ENCODE measurements at regions of chr10 and their contacts with region 1.

Region 1: DNA sequence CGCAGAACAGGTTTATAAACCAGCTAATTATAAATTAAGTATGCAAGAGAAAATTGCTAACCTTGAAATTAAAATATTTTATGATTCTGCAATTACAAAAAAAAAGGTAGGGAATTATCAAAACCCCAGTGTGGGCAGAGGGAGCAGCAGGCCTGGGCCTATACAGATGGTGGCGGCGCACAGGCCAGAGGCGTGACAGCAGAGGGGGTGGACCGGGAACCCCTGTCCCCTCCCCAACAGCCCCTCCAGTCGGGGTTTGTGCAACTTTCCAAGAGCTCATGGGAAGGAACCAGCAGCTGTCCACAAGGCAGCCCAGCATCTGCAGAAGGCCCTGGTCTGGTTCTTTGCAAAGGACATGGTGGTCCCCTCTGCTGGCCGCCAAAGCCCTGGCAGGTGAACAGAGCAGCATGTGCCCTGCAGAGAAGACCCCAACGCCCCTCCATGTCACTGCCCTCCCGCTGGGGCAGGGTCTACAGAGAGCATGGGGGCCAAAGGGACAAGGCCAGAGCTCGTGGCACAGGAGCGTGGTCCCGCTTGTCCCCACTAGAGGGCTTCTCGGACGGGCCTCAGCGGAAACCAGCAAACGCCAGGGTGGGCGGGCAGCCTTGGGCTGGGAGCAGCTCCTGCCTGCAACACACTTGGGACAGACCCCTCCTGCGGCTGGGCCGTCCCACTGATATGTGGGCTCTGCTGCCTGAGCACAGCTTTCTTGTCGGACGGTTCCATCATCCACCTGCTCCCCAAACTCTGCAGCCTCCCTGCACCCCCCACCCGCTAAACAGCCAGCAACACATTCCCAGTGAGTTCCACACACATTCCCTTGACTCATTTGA is 75.1 kb downstream of the EBF3 start:
- DNase-seq: peak in 13 of 14 experiments; percentile 9 to 49 (median 19)
- ATAC-seq: peak; percentile 34
- H3K4me3 ChIP-seq: no peak overlapping the region
- H3K4me3 Mint-ChIP-seq: no peak overlapping the region
- H3K27ac ChIP-seq: no peak overlapping the region
- H3K27ac Mint-ChIP-seq: no peak overlapping the region
- H3K4me1 ChIP-seq: no peaks in the 10 kb centered on the region
- H3K4me1 Mint-ChIP-seq: no peaks in the 10 kb centered on the region
- H3K27me3 ChIP-seq: no peaks in the 10 kb centered on the region
- H3K27me3 Mint-ChIP-seq: peaks cover 9% of the 10 kb centered on the region
- CTCF ChIP-seq: peak; percentile 55

Region 2: GRCh38 chr10:129790715-129791446 is 98.1 kb before region 1 on chr10:
- CTCF ChIA-PET with region 1: no interaction called
- POLR2A ChIA-PET with region 1: no interaction called
- intact Hi-C with region 1: no loop called
- DNase-seq: no peak
- ATAC-seq: no peak
- H3K4me3 ChIP-seq: no peak overlapping the region
- H3K4me3 Mint-ChIP-seq: no peak overlapping the region
- H3K27ac ChIP-seq: no peak overlapping the region
- H3K27ac Mint-ChIP-seq: no peak overlapping the region
- H3K4me1 ChIP-seq: no peaks in the 10 kb centered on the region
- H3K4me1 Mint-ChIP-seq: no peaks in the 10 kb centered on the region
- H3K27me3 ChIP-seq: no peaks in the 10 kb centered on the region
- H3K27me3 Mint-ChIP-seq: no peaks in the 10 kb centered on the region
- CTCF ChIP-seq: no peak

Region 3: GRCh38 chr10:129825826-129826225 is 63.2 kb before region 1 on chr10:
- CTCF ChIA-PET with region 1: no interaction called
- POLR2A ChIA-PET with region 1: no interaction called
- intact Hi-C with region 1: no loop called
- DNase-seq: no peak
- ATAC-seq: no peak
- H3K4me3 ChIP-seq: no peak overlapping the region
- H3K4me3 Mint-ChIP-seq: no peak overlapping the region
- H3K27ac ChIP-seq: no peak overlapping the region
- H3K27ac Mint-ChIP-seq: no peak overlapping the region
- H3K4me1 ChIP-seq: no peaks in the 10 kb centered on the region
- H3K4me1 Mint-ChIP-seq: no peaks in the 10 kb centered on the region
- H3K27me3 ChIP-seq: no peaks in the 10 kb centered on the region
- H3K27me3 Mint-ChIP-seq: no peaks in the 10 kb centered on the region
- CTCF ChIP-seq: no peak

Region 4: DNA sequence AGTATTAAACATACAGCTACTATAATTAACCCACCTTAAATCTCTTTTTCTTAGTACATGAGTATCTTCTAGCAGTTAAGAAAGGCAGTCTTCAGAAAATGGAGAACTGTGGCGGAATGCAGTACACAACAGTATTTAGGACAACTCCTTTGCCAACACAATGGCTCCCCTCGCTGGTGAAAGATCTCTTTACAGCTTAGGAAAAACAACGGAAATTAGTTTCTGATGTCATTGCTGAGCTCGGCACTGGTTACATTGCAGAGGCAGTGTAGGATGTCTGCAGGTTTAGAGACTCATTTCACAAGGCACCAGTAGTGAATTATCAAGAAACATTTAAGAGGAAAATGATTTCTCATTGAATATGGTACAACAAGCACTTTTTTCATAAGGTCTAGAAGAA is 290.6 kb after region 1 on chr10:
- CTCF ChIA-PET with region 1: no interaction called
- POLR2A ChIA-PET with region 1: no interaction called
- intact Hi-C with region 1: loop called in 1 of 2 experiments (anchors 5 kb)
- DNase-seq: peak in 9 of 14 experiments; percentile 17 to 68 (median 31)
- ATAC-seq: peak; percentile 98
- H3K4me3 ChIP-seq: no peak overlapping the region
- H3K4me3 Mint-ChIP-seq: no peak overlapping the region
- H3K27ac ChIP-seq: no peak overlapping the region
- H3K27ac Mint-ChIP-seq: peak overlapping the region; percentile 13
- H3K4me1 ChIP-seq: no peaks in the 10 kb centered on the region
- H3K4me1 Mint-ChIP-seq: peaks cover 22% of the 10 kb centered on the region
- H3K27me3 ChIP-seq: no peaks in the 10 kb centered on the region
- H3K27me3 Mint-ChIP-seq: no peaks in the 10 kb centered on the region
- CTCF ChIP-seq: peak; percentile 56